ENCODE measurements at regions of chr15 and their contacts with region 1.

Region 1: DNA sequence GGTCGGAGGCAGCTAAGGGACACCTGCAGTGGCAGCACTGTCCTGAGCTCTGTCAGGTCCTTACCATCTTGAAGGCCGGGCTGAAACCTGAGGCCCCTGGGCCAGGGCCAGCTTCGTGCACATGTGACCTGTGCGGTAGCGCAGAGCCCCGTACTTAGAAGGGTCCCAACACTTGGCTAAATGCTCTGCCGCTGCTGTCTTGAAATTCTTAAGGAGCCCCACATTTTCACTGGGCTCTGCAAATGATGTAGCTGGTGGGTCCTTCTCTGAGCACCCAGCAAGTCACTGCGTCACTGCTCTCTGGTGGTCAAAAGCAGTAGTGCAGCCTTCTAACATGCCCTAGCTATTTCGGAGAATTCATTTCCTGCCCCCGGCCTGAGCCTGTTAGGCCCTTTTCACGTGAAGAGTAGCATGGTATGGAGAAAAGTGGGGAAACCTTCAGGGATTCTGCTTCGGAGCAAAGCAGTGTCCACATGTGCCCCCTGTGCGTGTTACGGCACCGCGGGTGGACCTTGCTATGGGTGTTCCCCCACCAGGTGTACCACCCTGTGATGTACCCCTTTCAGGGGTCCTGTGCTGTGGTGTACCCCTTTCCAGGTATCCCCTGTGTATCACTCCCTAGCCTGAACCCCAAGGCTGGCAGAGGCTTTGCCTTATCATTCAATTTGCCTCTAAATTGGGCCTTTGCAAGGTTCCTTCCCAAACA is 79.7 kb downstream of the TMEM266 start:
- DNase-seq: peak in 2 of 3 donors; percentile 62 to 76
- ATAC-seq: peak; percentile 81 to 88
- H3K4me3 ChIP-seq: no peak overlapping the region
- H3K27ac ChIP-seq: no peak overlapping the region
- H3K4me1 ChIP-seq: peaks cover 1% of the 10 kb centered on the region
- H3K27me3 ChIP-seq: no peaks in the 10 kb centered on the region

Region 2: GRCh38 chr15:75809986-75810750 is 329.4 kb before region 1 on chr15:
- intact Hi-C with region 1: loop called in 2 of 4 experiments (anchors 5 kb)
- DNase-seq: no peak
- ATAC-seq: peak; percentile 33 to 57
- H3K4me3 ChIP-seq: no peak overlapping the region
- H3K27ac ChIP-seq: no peak overlapping the region
- H3K4me1 ChIP-seq: no peaks in the 10 kb centered on the region
- H3K27me3 ChIP-seq: no peaks in the 10 kb centered on the region

Region 3: GRCh38 chr15:75947092-75947491 is 192.4 kb before region 1 on chr15:
- intact Hi-C with region 1: no loop called
- DNase-seq: no peak
- ATAC-seq: no peak
- H3K4me3 ChIP-seq: no peak overlapping the region
- H3K27ac ChIP-seq: no peak overlapping the region
- H3K4me1 ChIP-seq: no peaks in the 10 kb centered on the region
- H3K27me3 ChIP-seq: no peaks in the 10 kb centered on the region

Region 4: DNA sequence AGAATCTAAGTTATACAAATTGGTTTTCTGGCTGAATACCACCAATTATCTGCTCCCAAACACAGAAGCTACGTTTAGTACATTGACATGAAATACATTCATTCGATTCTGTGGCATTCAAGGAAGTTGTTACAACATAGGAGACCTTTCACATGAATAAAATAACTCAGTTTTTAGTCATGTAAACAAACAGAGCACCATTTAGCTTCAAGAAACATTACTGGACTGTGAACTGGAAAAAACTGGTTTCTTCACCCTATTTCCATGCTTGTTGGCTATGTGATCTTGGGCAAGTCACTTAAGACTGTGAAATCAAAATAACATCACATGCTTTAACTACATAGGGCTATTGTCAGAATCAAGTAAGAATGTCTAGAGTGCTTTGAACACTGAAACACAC is 173.4 kb before region 1 on chr15:
- intact Hi-C with region 1: no loop called
- DNase-seq: no peak
- ATAC-seq: no peak
- H3K4me3 ChIP-seq: no peak overlapping the region
- H3K27ac ChIP-seq: no peak overlapping the region
- H3K4me1 ChIP-seq: no peaks in the 10 kb centered on the region
- H3K27me3 ChIP-seq: no peaks in the 10 kb centered on the region

Region 5: GRCh38 chr15:76012021-76012551 is 127.4 kb before region 1 on chr15 and contains the start of gene NRG4:
- intact Hi-C with region 1: no loop called
- DNase-seq: no peak
- ATAC-seq: no peak
- H3K4me3 ChIP-seq: peak within 1 kb of the TSS; percentile 10
- H3K27ac ChIP-seq: no peak within 1 kb of the TSS
- H3K4me1 ChIP-seq: no peaks in the 10 kb centered on the region
- H3K27me3 ChIP-seq: no peaks in the 10 kb centered on the region
- total RNA-seq, gene NRG4: 0.34 TPM in 1 of 4 donors, not detected in the others

Region 6: GRCh38 chr15:76057332-76058000 is 82.1 kb before region 1 on chr15:
- intact Hi-C with region 1: loop called (anchors 2 to 5 kb)
- DNase-seq: no peak
- ATAC-seq: no peak
- H3K4me3 ChIP-seq: peak overlapping the region; percentile 28
- H3K27ac ChIP-seq: no peak overlapping the region
- H3K4me1 ChIP-seq: no peaks in the 10 kb centered on the region
- H3K27me3 ChIP-seq: no peaks in the 10 kb centered on the region

Region 7: GRCh38 chr15:76185716-76186115 is 46.2 kb after region 1 on chr15:
- intact Hi-C with region 1: no loop called
- DNase-seq: no peak
- ATAC-seq: peak in 1 of 2 donors; percentile 22
- H3K4me3 ChIP-seq: no peak overlapping the region
- H3K27ac ChIP-seq: no peak overlapping the region
- H3K4me1 ChIP-seq: no peaks in the 10 kb centered on the region
- H3K27me3 ChIP-seq: no peaks in the 10 kb centered on the region

Measured in right cardiac atrium (tissue), 5 donors.